AG04449 (cell line): ENCODE measurements at regions of chr11 and their contacts with region 1.

Region 1: GRCh38 chr11:67656278-67656922 is 5.9 kb upstream of the ACY3 start:
- DNase-seq: no peak
- H3K4me3 ChIP-seq: no peak overlapping the region
- CTCF ChIP-seq: no peak

Region 2: DNA sequence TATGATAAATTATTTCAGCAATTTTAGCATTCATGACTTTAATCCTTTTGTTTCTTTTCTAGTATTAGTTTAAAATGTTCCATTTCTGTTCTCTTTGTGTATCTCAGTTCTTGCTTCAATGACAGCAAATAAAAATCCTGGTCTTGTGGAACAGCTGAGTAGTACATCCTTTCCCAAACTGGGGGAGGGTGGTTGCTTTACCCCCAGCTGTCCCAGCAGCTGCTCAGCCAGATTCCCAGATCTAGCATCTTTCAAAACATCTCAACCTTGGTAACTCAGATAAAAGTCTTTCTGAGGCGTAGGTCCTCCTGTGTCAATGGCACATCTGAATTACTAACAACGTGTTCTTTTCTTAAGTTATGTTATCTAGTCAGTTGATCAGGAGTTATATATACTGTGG is 462.3 kb before region 1 on chr11:
- CTCF ChIA-PET with region 1: no interaction called
- POLR2A ChIA-PET with region 1: no interaction called
- DNase-seq: no peak
- H3K4me3 ChIP-seq: no peak overlapping the region
- CTCF ChIP-seq: no peak

Region 3: DNA sequence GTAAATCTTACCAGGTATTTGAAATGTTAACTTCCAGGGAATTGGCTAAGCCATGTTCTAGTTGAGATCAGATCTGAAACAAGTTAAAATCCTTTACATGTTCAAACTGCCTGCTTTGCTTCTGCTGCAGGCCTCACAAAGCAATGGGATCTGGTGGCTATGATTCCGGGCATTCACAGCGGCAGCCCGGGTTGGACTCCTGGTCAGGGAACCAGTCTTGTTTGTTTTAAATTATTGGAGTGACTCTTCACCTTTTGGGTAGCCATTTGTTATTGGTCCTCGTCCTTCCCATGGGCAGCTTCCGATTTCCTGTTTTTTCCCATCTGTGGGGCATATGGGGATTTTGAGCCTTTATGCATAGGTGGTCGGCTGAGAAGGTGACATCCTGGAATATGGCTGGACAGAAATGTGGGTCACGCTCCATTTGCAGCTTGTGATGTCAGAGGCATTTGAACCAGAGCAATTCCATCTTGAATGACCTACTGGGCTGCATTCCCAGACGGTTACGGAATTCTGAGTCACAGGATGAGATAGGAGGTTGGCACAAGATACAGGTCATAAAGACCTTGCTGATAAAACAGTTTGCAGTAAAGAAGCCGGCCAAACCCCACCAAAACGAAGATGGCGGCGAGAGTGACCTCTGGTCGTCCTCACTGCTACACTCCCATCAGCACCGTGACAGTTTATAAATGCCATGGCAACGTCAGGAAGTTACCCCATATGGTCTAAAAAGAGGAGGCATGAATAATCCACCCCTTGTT is 92.9 kb before region 1 on chr11:
- CTCF ChIA-PET with region 1: no interaction called
- POLR2A ChIA-PET with region 1: no interaction called
- DNase-seq: peak; percentile 80
- H3K4me3 ChIP-seq: no peak overlapping the region
- CTCF ChIP-seq: no peak

Region 4: DNA sequence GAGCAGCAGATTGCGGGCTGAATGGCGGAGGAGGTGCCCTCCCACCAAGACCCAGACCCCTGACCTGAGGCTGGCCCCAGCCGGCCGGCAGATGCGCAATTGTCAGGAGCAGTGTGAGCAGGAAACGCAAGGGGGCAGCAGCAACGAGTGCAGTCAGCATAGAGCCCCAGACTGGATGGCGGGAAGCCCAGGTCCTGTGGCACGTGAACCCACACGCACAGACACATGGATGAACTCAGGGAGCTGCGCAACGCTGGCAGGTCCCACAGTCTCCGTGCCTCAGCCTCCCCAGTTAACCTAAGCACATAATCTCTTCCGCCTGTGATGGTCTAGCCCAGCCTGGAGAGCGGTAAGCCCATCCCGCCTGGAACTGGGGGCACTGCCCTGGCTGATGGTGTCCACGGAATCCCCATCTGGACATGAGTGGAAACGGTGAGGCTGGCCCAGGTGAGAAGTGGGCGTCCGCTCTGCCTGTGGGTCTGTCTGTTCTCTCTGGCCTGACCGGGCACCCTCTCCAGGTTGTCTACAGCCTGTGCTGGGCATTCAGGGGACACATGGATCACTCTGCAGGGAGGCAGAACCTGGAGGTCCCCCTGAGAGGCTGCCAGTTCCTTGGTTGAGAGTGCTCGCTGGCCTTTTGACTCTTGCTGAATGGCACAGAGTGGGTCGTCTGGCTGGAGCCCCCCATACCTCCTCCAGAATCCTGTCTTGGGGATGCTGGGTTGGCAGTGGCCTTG is 16.2 kb before region 1 on chr11:
- CTCF ChIA-PET with region 1: interaction called, 28 read pairs
- POLR2A ChIA-PET with region 1: no interaction called
- DNase-seq: no peak
- H3K4me3 ChIP-seq: no peak overlapping the region
- CTCF ChIP-seq: peak; percentile 57